GM23248 (cell line): ENCODE measurements at regions of chr21 and their contacts with region 1.

Region 1: DNA sequence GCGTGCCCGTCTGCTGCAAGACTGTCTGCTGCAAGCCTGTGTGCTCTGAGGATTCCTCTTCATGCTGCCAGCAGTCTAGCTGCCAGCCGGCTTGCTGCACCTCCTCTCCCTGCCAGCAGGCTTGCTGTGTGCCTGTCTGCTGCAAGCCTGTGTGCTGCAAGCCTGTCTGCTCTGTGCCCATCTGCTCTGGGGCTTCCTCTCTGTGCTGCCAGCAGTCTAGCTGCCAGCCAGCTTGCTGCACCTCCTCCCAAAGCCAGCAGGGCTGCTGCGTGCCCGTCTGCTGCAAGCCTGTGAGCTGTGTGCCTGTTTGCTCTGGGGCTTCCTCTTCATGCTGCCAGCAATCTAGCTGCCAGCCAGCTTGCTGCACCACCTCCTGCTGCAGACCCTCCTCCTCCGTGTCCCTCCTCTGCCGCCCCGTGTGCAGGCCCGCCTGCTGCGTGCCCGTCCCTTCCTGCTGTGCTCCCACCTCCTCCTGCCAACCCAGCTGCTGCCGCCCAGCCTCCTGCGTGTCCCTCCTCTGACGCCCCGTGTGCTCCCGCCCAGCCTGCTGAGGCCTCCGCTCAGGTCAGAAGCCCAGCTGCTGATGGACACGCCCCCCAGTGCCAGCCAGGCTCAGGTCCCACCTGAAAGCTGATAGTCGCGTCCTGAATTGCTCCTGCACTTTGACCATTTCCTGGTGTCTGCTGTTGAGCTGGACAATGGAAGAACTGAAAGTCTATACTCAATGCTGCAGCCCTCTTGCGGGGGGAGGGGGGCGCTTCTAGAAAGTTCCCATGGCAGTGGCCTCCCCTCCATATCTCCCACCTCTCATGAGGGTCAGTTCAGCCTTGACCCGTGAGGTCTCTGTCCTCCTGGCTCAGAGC is 1.1 kb downstream of the KRTAP10-4 start:
- DNase-seq: no peak
- H3K4me3 ChIP-seq: no peak overlapping the region
- H3K27ac ChIP-seq: no peak overlapping the region
- H3K4me1 ChIP-seq: no peaks in the 10 kb centered on the region
- H3K27me3 ChIP-seq: peaks cover 5% of the 10 kb centered on the region; the same call in 1 of the 2 replicates

Region 2: DNA sequence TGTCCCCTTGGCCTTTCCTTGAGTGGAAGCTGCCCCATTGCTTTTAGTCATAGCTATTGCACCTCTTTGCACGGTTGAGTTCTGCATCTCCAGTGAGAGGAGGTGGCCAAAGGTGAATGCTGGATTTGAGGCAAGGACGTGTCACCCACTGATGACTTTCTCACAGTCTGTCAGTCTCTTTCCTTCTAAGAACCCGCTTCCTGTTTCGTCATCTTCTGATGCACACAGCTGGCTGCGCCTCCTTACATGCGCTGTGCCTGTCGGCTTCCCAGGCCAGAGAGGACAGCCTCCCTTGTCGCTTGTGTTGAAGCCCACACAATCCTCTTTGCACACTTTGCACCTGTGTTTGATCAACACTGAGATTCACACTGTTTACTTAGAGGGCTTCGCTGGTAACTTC is 509.2 kb before region 1 on chr21:
- in situ Hi-C with region 1: loop called (anchors 25 kb)
- DNase-seq: no peak
- H3K4me3 ChIP-seq: no peak overlapping the region
- H3K27ac ChIP-seq: no peak overlapping the region
- H3K4me1 ChIP-seq: no peaks in the 10 kb centered on the region
- H3K27me3 ChIP-seq: no peaks in the 10 kb centered on the region

Region 3: DNA sequence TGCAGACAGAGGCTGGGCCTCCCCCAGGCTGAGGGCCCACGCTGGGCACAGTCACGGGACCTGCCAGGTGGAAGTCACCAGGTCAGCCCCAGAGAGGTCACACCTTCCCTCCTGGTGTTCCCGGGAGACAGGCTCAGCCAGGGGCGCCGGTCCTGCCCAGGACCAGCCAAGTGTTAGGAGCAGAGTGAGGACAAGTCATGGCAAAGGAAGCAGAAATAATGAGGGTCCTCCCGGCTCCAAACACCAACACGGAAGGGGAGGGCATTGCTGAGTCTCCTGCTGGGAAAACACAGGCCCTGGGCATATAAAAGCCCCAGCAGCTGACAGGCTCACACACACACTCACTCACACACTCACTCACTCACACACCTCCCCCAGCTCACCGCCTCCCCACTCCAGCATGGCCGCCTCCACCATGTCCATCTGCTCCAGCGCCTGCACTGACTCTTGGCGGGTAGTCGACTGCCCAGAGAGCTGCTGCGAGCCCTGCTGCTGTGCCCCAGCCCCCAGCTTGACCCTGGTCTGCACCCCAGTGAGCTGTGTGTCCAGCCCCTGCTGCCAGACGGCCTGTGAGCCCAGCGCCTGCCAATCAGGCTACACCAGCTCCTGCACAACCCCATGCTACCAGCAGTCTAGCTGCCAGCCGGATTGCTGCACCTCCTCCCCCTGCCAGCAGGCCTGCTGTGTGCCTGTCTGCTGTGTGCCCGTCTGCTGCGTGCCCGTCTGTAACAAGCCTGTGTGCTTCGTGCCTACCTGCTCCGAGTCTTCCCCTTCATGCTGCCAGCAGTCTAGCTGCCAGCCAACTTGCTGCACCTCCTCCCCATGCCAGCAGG is 62.6 kb after region 1 on chr21 and contains the start of gene KRTAP10-10:
- in situ Hi-C with region 1: no loop called
- DNase-seq: no peak
- H3K4me3 ChIP-seq: no peak within 1 kb of the TSS
- H3K27ac ChIP-seq: no peak within 1 kb of the TSS
- H3K4me1 ChIP-seq: no peaks in the 10 kb centered on the region
- H3K27me3 ChIP-seq: no peaks in the 10 kb centered on the region
- total RNA-seq, gene KRTAP10-10: not detected in 2 replicates

Region 4: DNA sequence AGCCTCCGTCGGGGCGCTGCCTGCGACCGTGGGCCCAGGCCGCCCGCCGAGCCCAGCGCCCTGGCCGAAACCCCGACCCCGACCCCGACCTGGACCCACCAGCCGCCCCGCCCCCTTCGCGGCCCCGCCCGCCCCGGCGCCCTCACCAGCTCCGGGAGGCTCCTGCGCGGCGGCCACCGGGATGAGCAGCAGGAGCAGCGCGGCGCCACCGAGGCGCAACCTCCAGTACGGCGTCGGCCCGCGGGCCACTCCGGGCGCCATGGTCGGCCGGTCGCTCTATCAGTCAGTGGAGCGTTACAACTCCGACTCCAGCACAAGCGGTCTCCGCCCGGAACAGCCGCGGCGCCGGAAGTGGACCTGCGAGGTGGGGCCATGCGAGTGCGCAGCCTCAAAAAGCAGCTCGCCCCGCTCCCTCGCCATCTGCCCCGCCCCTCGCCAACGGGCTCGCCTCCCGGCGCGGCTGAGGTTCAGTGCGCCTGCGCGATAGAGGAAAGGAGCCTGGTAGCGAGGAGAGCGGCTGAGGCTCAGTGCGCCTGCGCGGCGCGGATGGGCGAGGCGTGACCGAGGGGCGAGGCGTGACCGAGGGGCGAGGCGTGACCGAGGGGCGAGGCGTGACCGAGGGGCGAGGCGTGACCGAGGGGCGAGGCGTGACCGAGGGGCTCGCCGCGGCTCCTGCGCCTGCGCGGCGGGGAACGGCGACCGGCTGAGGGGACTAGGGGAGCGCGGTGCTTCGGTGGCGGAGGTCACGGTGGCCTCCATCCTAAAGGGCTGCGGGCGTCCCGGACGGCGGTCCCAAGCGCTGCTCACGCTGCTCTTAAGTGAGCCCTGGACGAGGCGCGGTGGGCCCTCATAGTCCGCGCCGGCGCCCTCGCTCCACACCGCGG is 298.9 kb after region 1 on chr21 and contains the start of gene PTTG1IP:
- in situ Hi-C with region 1: no loop called
- DNase-seq: peak; percentile 99
- H3K4me3 ChIP-seq: peak within 1 kb of the TSS; percentile 95
- H3K27ac ChIP-seq: peak within 1 kb of the TSS; percentile 70
- H3K4me1 ChIP-seq: peaks cover 36% of the 10 kb centered on the region
- H3K27me3 ChIP-seq: no peaks in the 10 kb centered on the region
- total RNA-seq, gene PTTG1IP: 680 and 814 TPM in 2 replicates

Region 5: GRCh38 chr21:45011911-45012660 is 437.4 kb after region 1 on chr21:
- in situ Hi-C with region 1: no loop called
- DNase-seq: peak; percentile 94
- H3K4me3 ChIP-seq: peak overlapping the region; percentile 40; the same call in 1 of the 2 replicates
- H3K27ac ChIP-seq: peak overlapping the region; percentile 72
- H3K4me1 ChIP-seq: peaks cover 23% of the 10 kb centered on the region
- H3K27me3 ChIP-seq: no peaks in the 10 kb centered on the region